HCT116 (cell line): ENCODE measurements at regions of chrX and their contacts with region 1.

Region 1: DNA sequence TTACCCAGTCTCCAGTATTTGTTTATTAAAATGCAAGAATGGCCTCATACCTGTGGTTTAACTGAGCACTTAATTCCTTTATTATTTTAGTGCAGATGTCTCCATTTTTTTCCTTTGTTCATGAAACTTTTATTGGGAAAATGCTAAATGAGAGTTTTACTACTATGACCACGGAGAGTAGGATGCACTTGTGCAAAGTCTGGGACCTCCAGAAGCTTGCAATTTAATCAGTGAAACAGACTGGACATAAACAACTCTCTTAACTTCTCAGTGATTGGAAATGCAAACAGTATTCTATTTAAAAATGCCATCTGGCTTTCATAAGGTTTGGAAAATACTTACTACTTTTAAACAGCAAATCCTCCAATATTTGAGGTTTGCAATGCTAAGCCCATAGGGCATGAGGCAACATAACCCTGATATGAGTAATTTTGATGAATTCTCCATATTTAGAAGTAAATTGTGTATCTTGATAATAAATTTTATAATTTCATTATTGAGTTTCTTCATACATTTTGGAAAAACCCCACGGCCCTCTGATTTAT is 718.7 kb upstream of the MAGEB2 start:
- DNase-seq: no peak
- ATAC-seq: no peak
- H3K4me3 ChIP-seq: no peak overlapping the region
- H3K27ac ChIP-seq: no peak overlapping the region
- H3K4me1 ChIP-seq: no peaks in the 10 kb centered on the region
- H3K27me3 ChIP-seq: no peaks in the 10 kb centered on the region
- CTCF ChIP-seq: no peak
- POLR2A ChIP-seq: no peak
- RAD21 ChIP-seq: no peak

Region 2: DNA sequence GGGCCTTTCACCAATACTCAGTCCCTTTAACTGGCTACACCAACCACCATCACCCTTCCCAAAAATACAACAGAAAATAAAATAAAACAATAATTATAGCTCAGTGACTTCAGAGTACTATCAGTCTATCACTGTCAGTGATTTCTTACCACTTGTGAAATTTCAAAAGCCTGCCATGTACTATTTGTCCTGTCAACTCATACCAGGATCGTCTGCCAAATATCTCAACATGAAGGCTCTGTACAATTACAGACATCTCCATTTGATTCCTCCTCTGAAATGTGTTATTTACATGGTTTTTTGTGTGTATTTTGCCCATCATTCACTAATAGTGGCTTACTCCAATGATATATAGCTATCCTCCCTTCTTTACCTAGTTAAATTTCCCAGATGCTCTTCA is 137.4 kb before region 1 on chrX:
- CTCF ChIA-PET with region 1: no interaction called
- POLR2A ChIA-PET with region 1: no interaction called
- RAD21 ChIA-PET with region 1: no interaction called
- intact Hi-C with region 1: loop called (anchors 1 kb)
- DNase-seq: no peak
- ATAC-seq: no peak
- H3K4me3 ChIP-seq: no peak overlapping the region
- H3K27ac ChIP-seq: no peak overlapping the region
- H3K4me1 ChIP-seq: no peaks in the 10 kb centered on the region
- H3K27me3 ChIP-seq: no peaks in the 10 kb centered on the region
- CTCF ChIP-seq: no peak
- POLR2A ChIP-seq: no peak
- RAD21 ChIP-seq: no peak